WTC11 (cell line): ENCODE measurements at regions of chr16 and their contacts with region 1.

Region 1: GRCh38 chr16:88610080-88610479 is 28.3 kb upstream of the IL17C start:
- DNase-seq: peak; percentile 34
- ATAC-seq: peak; percentile 66
- H3K4me3 Mint-ChIP-seq: no peak overlapping the region
- H3K27ac Mint-ChIP-seq: no peak overlapping the region
- H3K4me1 Mint-ChIP-seq: peaks cover 13% of the 10 kb centered on the region
- H3K27me3 Mint-ChIP-seq: no peaks in the 10 kb centered on the region
- CTCF ChIP-seq: no peak

Region 2: DNA sequence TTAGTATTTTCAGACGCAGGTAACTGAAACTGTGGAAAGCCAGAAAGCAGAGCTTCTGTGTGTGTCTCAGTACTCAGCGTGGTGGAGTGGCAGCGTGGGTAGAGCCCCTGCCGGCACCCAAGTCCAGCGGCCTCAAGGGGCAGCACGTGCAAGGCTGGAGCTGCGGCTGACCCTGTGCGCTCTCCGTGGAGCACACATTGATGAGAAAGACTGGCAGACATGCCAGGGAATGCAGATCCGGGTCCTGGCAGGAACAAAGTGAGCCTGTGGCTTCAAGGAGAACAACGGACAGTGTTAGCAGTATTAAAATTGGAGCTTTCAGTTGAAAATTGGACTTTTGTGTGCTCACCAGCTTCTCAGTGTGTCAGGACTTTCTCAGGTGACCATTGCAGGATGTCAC is 16.6 kb before region 1 on chr16:
- CTCF ChIA-PET with region 1: interaction called, 11 read pairs
- POLR2A ChIA-PET with region 1: no interaction called
- DNase-seq: no peak
- ATAC-seq: no peak; the same call in 1 of the 2 replicates
- H3K4me3 Mint-ChIP-seq: no peak overlapping the region
- H3K27ac Mint-ChIP-seq: peak overlapping the region; percentile 57; the same call in 1 of the 2 replicates
- H3K4me1 Mint-ChIP-seq: no peaks in the 10 kb centered on the region
- H3K27me3 Mint-ChIP-seq: no peaks in the 10 kb centered on the region
- CTCF ChIP-seq: no peak

Region 3: DNA sequence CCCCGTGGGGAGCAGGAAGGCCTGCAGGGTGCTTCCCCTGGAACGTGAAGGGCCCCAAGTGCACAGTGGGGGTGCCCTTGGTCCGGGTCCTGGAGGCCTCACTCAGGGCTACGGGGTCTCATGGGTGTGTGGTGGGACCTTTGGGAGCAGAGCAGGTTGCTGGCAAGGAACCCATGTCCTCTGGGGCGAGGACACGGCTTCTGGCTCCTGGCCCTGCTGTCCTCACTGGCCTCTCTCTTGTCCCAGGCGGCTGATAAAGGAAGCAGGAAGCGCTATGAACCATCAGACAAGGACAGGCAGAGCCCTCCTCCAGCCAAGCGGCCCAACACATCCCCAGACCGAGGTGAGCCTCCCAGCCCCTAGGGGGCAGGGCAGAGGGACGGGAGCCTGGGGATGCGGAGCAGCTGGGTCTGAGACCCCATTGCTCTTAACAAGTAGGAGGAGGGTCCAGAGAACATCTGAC is 18.5 kb after region 1 on chr16:
- CTCF ChIA-PET with region 1: interaction called, 17 read pairs
- POLR2A ChIA-PET with region 1: interaction called, 6 read pairs
- DNase-seq: peak; percentile 85
- ATAC-seq: peak; percentile 88
- H3K4me3 Mint-ChIP-seq: no peak overlapping the region
- H3K27ac Mint-ChIP-seq: peak overlapping the region; percentile 53; the same call in 1 of the 2 replicates
- H3K4me1 Mint-ChIP-seq: peaks cover 6% of the 10 kb centered on the region
- H3K27me3 Mint-ChIP-seq: no peaks in the 10 kb centered on the region
- CTCF ChIP-seq: peak; percentile 47

Region 4: GRCh38 chr16:88633684-88634140 is 23.6 kb after region 1 on chr16:
- CTCF ChIA-PET with region 1: interaction called, 34 read pairs
- POLR2A ChIA-PET with region 1: interaction called, 6 read pairs
- DNase-seq: peak; percentile 67
- ATAC-seq: peak; percentile 45
- H3K4me3 Mint-ChIP-seq: peak overlapping the region; percentile 69
- H3K27ac Mint-ChIP-seq: no peak overlapping the region
- H3K4me1 Mint-ChIP-seq: peaks cover 33% of the 10 kb centered on the region
- H3K27me3 Mint-ChIP-seq: peaks cover 10% of the 10 kb centered on the region
- CTCF ChIP-seq: no peak

Region 5: DNA sequence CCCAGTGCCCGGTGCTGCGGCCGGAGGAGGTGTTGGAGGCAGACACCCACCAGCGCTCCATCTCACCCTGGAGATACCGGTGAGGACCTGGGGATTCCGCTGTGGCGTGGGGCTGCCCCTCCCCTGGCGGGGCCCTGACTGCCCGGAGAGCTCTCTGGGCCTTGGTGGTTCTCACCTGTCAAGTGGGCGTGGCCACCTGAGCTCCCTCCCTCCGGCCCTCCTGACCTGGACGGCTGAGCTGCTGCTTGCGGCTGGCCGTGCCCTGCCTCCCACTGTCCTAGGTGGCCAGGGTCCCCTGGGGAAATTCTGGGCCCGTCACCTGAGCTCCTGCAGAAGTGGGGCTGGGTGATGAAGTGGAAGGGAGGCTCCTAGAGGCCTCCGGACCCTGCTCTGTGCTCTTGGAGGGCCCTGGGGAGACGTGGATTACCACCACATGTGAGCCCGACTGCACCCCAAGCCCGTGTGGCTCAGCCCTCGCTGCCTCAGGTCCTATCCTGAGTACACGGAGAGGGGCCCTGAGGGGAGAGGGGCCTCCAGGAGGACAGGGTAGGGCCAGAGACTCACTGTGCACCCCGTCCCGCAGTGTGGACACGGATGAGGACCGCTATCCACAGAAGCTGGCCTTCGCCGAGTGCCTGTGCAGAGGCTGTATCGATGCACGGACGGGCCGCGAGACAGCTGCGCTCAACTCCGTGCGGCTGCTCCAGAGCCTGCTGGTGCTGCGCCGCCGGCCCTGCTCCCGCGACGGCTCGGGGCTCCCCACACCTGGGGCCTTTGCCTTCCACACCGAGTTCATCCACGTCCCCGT is 29.4 kb after region 1 on chr16:
- CTCF ChIA-PET with region 1: interaction called, 34 read pairs
- POLR2A ChIA-PET with region 1: no interaction called
- DNase-seq: peak; percentile 89
- ATAC-seq: peak; percentile 61
- H3K4me3 Mint-ChIP-seq: peak overlapping the region; percentile 33; the same call in 1 of the 2 replicates
- H3K27ac Mint-ChIP-seq: no peak overlapping the region
- H3K4me1 Mint-ChIP-seq: peaks cover 38% of the 10 kb centered on the region
- H3K27me3 Mint-ChIP-seq: peaks cover 22% of the 10 kb centered on the region
- CTCF ChIP-seq: no peak

Region 6: GRCh38 chr16:88672776-88673175 is 62.7 kb after region 1 on chr16:
- CTCF ChIA-PET with region 1: interaction called, 10 read pairs
- POLR2A ChIA-PET with region 1: no interaction called
- DNase-seq: peak; percentile 80
- ATAC-seq: peak; percentile 98
- H3K4me3 Mint-ChIP-seq: no peak overlapping the region
- H3K27ac Mint-ChIP-seq: peak overlapping the region; percentile 49; the same call in 1 of the 2 replicates
- H3K4me1 Mint-ChIP-seq: no peaks in the 10 kb centered on the region; the same call in 1 of the 2 replicates
- H3K27me3 Mint-ChIP-seq: no peaks in the 10 kb centered on the region
- CTCF ChIP-seq: no peak

Region 7: DNA sequence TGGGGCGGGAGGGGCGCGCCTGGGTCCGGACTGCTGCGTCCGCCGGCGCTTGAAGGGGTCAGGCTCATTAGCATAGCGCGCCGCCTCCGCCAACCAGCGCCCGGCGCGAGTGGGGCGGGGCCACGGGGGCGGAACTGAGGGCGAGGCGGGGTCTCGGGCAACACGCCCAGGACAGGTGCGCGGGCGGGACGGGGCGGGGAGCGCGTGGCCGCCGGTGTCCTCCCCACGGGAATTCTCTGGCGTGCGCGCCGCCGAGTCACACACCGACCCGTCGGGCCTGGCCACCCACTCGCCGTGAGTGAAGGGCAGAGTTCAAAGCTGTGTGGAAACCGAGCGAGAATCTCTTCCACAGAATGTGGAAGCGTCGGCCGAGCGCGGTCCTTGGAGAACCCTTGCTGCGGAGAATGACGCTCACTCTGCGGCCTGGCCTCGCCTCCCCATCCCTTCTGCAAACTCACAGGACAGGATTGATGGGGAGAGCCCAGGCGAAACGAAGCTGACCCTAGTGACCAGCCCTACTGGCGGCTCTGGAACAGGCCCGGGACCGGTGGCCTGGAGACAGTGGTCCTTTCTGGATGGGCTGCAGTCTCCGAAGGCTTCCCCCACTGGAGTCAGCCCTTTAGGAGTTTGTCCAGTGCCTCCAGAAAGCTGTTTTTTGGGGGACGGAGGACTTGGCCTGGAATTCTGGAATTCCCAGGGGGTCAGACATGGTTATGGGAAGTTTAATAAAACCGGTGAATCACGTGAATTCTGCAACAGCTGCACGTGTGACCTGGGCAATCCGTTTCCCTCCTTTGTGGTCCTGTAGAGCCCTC is 76.6 kb after region 1 on chr16 and contains the start of gene SNAI3:
- CTCF ChIA-PET with region 1: interaction called, 14 read pairs
- POLR2A ChIA-PET with region 1: interaction called, 3 read pairs
- DNase-seq: peak; percentile 95
- ATAC-seq: peak; percentile 92
- H3K4me3 Mint-ChIP-seq: peak within 1 kb of the TSS; percentile 74
- H3K27ac Mint-ChIP-seq: no peak within 1 kb of the TSS
- H3K4me1 Mint-ChIP-seq: peaks cover 15% of the 10 kb centered on the region
- H3K27me3 Mint-ChIP-seq: peaks cover 28% of the 10 kb centered on the region
- CTCF ChIP-seq: no peak
- total RNA-seq, gene SNAI3: 8.0 to 9.4 TPM (median 9.1 TPM) in 3 replicates